MCF 10A (cell line): ENCODE measurements at regions of chr12 and their contacts with region 1.

Region 1: DNA sequence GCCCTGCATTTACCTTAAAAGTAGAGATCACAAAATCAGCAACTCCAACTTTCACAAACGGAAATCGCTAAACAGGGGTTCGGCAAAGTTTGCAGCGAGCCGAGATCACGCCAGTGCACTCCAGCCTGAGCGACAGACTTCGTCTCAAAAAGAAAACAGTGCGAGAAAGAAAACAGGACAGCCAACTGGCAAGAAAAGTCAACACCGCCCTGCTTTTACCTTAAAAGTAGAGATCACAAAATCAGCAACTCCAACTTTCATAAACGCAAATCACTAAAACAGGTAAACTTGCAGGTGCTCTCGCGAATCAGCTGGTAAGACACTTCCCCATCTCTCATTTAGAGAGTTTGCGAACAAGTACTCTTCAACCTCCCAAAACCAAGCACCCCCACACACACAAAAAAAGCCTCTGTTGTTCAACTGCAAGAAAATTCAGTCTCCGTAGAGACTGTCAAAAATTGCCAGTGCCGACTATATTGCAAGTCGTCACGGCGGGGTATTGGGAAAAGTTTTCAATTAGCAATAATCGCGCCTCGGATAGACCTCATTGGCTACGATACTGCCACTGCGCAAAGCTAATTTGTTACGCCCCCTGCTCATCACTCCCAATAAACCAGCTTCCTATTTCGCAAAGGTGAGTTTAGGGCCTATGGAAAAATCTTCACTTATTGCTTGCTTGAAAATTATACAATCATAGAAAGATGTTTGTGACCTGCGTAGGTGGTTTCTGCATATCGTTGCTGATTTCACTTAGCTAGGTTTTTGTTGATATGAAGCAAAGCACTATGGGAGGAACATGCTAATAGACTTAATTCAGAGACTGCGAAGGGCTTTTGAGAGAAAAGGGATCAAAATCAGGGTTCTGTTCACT is at the start of gene RNU4-1:
- DNase-seq: peak; percentile 95
- H3K4me3 Mint-ChIP-seq: no peak within 1 kb of the TSS
- H3K27ac Mint-ChIP-seq: no peak within 1 kb of the TSS
- H3K4me1 Mint-ChIP-seq: no peaks in the 10 kb centered on the region
- H3K27me3 Mint-ChIP-seq: no peaks in the 10 kb centered on the region
- CTCF ChIP-seq: no peak
- total RNA-seq, gene RNU4-1: 1,764 and 2,069 TPM in 2 replicates

Region 2: GRCh38 chr12:120116792-120117651 is 175.9 kb before region 1 on chr12:
- CTCF ChIA-PET with region 1: no interaction called
- POLR2A ChIA-PET with region 1: interaction called, 28 read pairs
- intact Hi-C with region 1: no loop called
- DNase-seq: peak; percentile 92
- H3K4me3 Mint-ChIP-seq: peak overlapping the region; percentile 83
- H3K27ac Mint-ChIP-seq: peak overlapping the region; percentile 95
- H3K4me1 Mint-ChIP-seq: peaks cover 44% of the 10 kb centered on the region
- H3K27me3 Mint-ChIP-seq: no peaks in the 10 kb centered on the region
- CTCF ChIP-seq: no peak

Region 3: DNA sequence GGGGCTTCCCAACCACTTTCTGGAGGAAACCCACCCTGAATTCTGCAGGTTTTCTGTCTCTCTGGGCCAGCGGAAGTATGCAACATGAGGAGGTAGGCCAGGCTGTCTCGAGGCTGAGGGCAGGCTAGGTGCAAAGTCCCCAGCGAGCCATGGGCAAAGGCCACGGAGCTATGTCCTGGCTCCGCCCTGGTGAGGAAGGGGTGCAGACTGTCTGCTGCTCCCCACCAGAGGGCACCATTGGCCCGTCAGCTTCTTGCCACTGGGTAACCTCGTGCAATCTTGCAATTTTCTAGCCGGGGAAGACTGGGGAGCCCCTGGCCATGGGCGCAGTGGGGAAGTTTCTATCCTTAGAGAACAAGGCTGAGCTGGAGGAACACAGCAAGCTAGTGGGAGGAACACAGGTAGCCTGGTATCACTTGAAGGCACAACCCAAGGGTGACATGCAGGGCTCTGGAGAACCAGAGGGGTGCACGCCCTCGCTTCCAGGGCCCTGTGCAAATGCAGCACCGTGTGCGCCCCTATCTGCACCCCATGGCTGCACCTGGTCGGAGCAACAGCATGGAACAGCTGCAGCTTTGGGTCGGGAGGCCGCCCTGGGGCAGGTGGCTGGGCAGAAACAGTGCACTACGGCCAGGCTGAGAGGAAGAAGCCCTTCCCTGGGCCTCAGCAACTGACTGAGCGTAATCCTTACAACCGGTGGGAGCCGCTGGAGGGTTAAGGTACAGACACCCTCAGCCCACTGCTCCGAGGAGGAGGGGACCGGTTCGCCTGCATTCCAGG is 64.4 kb before region 1 on chr12:
- CTCF ChIA-PET with region 1: interaction called, 10 read pairs
- POLR2A ChIA-PET with region 1: interaction called, 125 read pairs
- intact Hi-C with region 1: loop called (anchors 1 kb)
- DNase-seq: peak; percentile 84
- H3K4me3 Mint-ChIP-seq: peak overlapping the region; percentile 50
- H3K27ac Mint-ChIP-seq: no peak overlapping the region
- H3K4me1 Mint-ChIP-seq: peaks cover 62% of the 10 kb centered on the region
- H3K27me3 Mint-ChIP-seq: no peaks in the 10 kb centered on the region
- CTCF ChIP-seq: peak; percentile 90

Region 4: DNA sequence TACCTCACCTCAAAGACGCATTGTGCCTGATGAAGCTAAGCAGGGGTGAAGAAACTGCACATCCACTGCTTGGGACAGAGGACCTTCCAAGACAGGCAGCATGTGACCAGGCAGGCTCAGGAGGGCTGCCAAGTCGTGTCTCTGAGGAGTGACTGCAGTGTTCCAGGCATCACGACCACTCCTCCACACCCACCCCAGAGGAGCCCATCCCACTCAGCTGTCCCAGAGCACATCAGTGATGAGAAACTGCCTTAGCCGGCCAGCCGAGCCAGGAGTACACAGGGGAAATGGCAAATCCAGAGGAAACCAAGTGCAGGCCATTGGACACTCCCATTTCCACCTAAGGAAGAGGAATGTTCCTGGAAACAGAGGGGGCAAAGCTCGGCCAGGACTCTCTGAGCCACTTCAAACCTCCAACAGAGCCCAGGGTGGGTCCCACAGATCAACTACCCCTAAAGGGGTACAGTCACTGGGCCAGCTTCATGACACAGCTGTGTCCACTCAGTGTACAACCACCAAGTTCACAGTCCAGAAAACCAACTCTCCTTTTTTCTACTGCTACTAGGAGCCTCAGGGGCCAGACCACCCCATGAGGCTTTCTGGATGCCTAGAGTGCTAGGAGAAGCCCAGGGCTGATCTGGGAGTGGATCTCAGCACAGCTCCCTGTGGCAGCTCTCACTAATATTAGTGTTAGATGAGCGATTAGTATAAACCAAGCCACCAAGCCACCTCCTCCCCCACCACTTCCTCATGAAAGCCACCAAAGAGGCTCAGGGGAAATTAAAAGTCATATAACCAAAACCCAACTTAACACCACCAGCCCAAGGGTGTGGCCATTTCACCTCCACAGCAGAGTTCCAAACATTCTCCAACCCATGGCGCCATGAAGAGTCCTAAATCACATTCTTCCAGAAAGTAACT is 42.8 kb before region 1 on chr12:
- CTCF ChIA-PET with region 1: no interaction called
- POLR2A ChIA-PET with region 1: interaction called, 24 read pairs
- intact Hi-C with region 1: no loop called
- DNase-seq: no peak
- H3K4me3 Mint-ChIP-seq: no peak overlapping the region
- H3K27ac Mint-ChIP-seq: peak overlapping the region; percentile 81
- H3K4me1 Mint-ChIP-seq: peaks cover 62% of the 10 kb centered on the region
- H3K27me3 Mint-ChIP-seq: no peaks in the 10 kb centered on the region
- CTCF ChIP-seq: no peak

Region 5: DNA sequence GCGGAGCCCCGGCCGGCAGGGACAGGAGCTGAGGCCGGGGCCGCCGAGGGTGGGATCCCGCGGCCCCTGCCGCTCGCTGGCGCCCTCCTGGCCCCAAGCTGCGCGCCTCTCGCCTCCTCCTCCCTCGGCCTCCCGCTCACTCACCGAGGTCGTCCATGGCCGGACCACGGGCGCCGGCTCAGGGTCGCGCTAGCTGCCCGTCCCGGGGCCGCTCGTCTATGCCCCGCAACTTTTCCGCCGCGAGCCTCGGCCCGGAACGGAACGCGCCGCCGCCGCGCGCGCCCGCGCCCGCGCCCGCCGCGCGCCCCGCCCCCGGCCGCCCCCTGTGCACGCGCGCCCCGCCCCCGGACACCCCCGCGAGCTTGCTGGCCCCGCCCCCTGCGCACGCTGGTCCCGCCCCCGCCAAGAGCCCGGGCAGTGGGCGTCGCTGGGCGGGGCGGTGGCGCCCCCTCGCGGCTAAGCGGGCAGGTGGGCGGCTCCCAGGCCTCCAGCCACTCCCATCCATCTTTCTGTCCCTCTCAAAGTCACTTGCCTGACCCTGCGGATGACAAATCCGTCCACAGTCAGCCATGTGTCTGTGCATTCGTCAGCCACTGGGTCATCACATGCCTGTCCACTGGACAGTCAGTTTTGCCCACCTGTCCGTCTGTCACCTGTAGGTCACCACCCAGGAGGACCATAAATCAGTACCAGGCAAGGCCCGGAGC is 27.3 kb before region 1 on chr12 and contains the start of gene PXN:
- CTCF ChIA-PET with region 1: interaction called, 3 read pairs
- POLR2A ChIA-PET with region 1: interaction called, 112 read pairs
- intact Hi-C with region 1: no loop called
- DNase-seq: peak; percentile 72
- H3K4me3 Mint-ChIP-seq: peak within 1 kb of the TSS; percentile 95
- H3K27ac Mint-ChIP-seq: peak within 1 kb of the TSS; percentile 94
- H3K4me1 Mint-ChIP-seq: peaks cover 28% of the 10 kb centered on the region
- H3K27me3 Mint-ChIP-seq: no peaks in the 10 kb centered on the region
- CTCF ChIP-seq: peak; percentile 84
- total RNA-seq, gene PXN: 216 and 256 TPM in 2 replicates

Region 6: DNA sequence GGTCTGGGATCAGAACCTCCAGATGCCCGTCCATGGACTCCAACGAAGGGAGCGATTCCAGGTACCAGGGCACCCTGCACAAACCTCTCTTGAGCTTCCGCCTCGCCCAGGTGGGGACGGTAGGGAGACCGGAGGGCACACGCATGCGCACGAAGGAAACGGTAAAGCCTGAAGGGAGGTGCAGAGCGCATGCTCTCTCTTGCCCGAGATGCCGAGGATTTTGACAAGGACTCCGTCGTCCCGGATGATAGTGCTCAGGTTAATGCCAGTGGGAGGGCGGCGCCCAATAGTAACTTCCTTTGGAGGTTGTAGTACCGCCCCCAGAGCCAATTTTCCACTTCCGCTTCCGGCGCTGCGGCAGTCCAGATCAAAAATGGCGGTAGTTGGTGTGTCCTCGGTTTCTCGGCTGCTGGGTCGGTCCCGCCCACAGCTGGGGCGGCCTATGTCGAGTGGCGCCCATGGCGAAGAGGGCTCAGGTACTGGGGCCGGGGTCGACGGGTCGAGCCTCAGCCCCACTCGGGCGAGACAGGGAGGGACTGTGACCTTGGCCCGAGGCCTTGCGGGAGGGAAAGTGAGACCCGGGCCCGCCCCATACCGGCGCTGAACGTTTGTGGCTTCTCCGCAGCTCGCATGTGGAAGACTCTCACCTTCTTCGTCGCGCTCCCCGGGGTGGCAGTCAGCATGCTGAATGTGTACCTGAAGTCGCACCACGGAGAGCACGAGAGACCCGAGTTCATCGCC is 145.0 kb after region 1 on chr12 and contains the start of gene COX6A1:
- CTCF ChIA-PET with region 1: interaction called, 3 read pairs
- POLR2A ChIA-PET with region 1: interaction called, 13 read pairs
- intact Hi-C with region 1: no loop called
- DNase-seq: peak; percentile 98
- H3K4me3 Mint-ChIP-seq: peak within 1 kb of the TSS; percentile 98
- H3K27ac Mint-ChIP-seq: peak within 1 kb of the TSS; percentile 92
- H3K4me1 Mint-ChIP-seq: peaks cover 6% of the 10 kb centered on the region
- H3K27me3 Mint-ChIP-seq: no peaks in the 10 kb centered on the region
- CTCF ChIP-seq: no peak
- total RNA-seq, gene COX6A1: 475 and 518 TPM in 2 replicates